Left lung (tissue), 14 donors: ENCODE measurements at regions of chr13 and their contacts with region 1.

Region 1: GRCh38 chr13:43094901-43095300 is 71.5 kb downstream of the DNAJC15 start:
- DNase-seq: no peak
- ATAC-seq: no peak
- H3K4me3 ChIP-seq: no peak overlapping the region
- H3K27ac ChIP-seq: no peak overlapping the region
- H3K4me1 ChIP-seq: no peaks in the 10 kb centered on the region
- H3K27me3 ChIP-seq: no peaks in the 10 kb centered on the region
- CTCF ChIP-seq: no peak

Region 2: GRCh38 chr13:42602906-42603305 is 492.0 kb before region 1 on chr13:
- intact Hi-C with region 1: no loop called
- DNase-seq: no peak
- ATAC-seq: no peak
- H3K4me3 ChIP-seq: no peak overlapping the region
- H3K27ac ChIP-seq: no peak overlapping the region
- H3K4me1 ChIP-seq: no peaks in the 10 kb centered on the region
- H3K27me3 ChIP-seq: no peaks in the 10 kb centered on the region
- CTCF ChIP-seq: no peak

Region 3: GRCh38 chr13:42643076-42643475 is 451.8 kb before region 1 on chr13:
- intact Hi-C with region 1: no loop called
- DNase-seq: peak in 1 of 4 donors; percentile 40
- ATAC-seq: no peak
- H3K4me3 ChIP-seq: no peak overlapping the region
- H3K27ac ChIP-seq: no peak overlapping the region
- H3K4me1 ChIP-seq: no peaks in the 10 kb centered on the region
- H3K27me3 ChIP-seq: no peaks in the 10 kb centered on the region
- CTCF ChIP-seq: no peak

Region 4: DNA sequence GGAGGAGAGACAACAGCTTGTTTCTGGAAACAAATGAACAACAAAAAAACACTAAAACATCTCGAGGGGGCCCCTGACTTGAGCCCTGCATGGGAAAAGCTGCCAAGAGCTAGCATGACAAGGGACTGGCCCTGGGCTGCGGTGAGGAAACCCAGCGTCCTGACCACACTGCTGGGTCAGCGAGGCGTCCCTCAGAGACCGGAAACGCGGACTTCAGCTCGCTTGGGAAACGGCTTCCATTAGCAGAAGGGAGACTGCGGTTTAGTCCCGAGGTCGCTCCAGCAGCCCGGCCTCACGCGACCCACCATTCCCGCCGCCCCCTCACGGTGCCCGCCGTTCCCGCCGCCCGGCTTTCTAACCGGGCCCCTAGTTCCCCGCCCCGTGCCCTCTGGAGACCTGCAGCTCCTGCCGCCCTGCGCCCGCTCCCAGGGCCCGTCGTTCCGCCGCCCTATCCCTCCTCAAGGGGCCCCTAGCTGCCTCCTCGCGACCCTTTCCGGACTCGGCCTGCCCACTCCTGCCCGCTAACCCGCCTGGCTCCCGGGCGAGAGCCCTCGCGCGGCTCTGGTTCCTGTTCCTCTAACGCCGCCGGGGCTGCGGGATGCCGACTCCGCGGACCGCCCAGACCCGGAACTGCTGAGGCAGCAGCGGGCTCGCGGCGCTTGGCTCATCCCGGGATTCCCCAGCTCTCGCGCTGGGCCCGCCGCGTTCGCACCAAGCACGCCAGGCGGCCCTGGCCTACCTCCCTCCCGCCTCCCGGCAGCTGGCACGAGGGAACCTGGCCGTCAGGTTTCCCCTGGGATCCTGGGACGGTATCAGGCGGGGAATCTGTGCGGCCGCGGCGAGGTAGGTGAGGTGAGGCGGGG is 784.2 kb after region 1 on chr13 and contains the start of gene CCDC122:
- intact Hi-C with region 1: loop called in 1 of 2 experiments (anchors 10 kb)
- DNase-seq: peak; percentile 80 to 99 (median 88)
- ATAC-seq: peak; percentile 88
- H3K4me3 ChIP-seq: peak within 1 kb of the TSS; percentile 66
- H3K27ac ChIP-seq: peak within 1 kb of the TSS; percentile 96 to 99
- H3K4me1 ChIP-seq: peaks cover 6 to 44% of the 10 kb centered on the region in 2 donors
- H3K27me3 ChIP-seq: no peaks in the 10 kb centered on the region
- CTCF ChIP-seq: no peak
- polyA plus RNA-seq, gene CCDC122: 5.3 to 11.6 (median 6.0) TPM

Region 5: GRCh38 chr13:43991773-43992201 is 896.9 kb after region 1 on chr13:
- intact Hi-C with region 1: no loop called
- DNase-seq: no peak
- ATAC-seq: no peak
- H3K4me3 ChIP-seq: no peak overlapping the region
- H3K27ac ChIP-seq: no peak overlapping the region
- H3K4me1 ChIP-seq: no peaks in the 10 kb centered on the region
- H3K27me3 ChIP-seq: no peaks in the 10 kb centered on the region
- CTCF ChIP-seq: no peak